Heart left ventricle (tissue), 16 donors: ENCODE measurements at regions of chrX and their contacts with region 1.

Region 1: DNA sequence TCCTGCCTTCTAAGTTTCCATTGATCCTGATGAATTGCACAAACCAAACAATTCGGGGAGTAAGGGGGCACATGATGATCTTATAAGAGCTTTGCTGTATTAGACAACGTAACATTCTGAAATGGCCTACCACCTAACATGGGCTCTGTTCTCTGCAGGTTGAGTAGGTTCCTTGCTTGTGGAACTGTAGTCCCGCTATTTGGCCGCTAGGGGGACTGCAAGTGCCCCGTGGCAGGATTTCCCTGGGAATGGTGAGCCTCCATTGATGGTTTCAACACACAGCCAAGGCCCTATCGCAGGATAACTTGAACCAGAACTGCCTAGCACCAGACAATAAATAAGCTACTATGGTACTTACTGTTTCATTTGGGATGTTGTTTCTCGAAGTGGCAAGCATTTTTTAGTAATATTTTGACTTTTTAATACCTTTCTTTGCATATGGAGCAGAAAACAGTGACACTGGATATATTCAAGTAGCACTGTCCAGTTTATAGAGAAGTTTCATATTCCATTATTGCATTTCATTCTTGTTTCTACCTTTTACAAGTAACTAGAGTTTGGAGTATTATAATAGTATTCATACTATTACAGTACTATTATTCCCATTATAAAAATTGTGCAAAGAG is 11.9 kb downstream of the AR start:
- DNase-seq: peak in 1 of 5 donors; percentile 14
- ATAC-seq: peak in 3 of 4 donors; percentile 32 to 42 (median 36)
- H3K4me3 ChIP-seq: no peak overlapping the region
- H3K27ac ChIP-seq: no peak overlapping the region
- H3K4me1 ChIP-seq: peaks cover 0 to 4% (median 0%) of the 10 kb centered on the region in 12 donors
- H3K27me3 ChIP-seq: peaks cover 0 to 3% (median 0%) of the 10 kb centered on the region in 9 donors
- CTCF ChIP-seq: peak; percentile 39 to 77 (median 62)
- POLR2A ChIP-seq: no peak

Region 2: GRCh38 chrX:67503004-67503403 is 52.7 kb before region 1 on chrX:
- intact Hi-C with region 1: no loop called
- DNase-seq: no peak
- ATAC-seq: no peak
- H3K4me3 ChIP-seq: no peak overlapping the region
- H3K27ac ChIP-seq: no peak overlapping the region
- H3K4me1 ChIP-seq: no peaks in the 10 kb centered on the region
- H3K27me3 ChIP-seq: no peaks in the 10 kb centered on the region
- CTCF ChIP-seq: no peak
- POLR2A ChIP-seq: no peak

Region 3: GRCh38 chrX:67673741-67674274 is 118.1 kb after region 1 on chrX:
- intact Hi-C with region 1: no loop called
- DNase-seq: no peak
- ATAC-seq: peak in 1 of 4 donors; percentile 63
- H3K4me3 ChIP-seq: no peak overlapping the region
- H3K27ac ChIP-seq: no peak overlapping the region
- H3K4me1 ChIP-seq: peaks cover 0 to 2% (median 0%) of the 10 kb centered on the region in 12 donors
- H3K27me3 ChIP-seq: peaks cover 0 to 3% (median 0%) of the 10 kb centered on the region in 9 donors
- CTCF ChIP-seq: no peak
- POLR2A ChIP-seq: no peak

Region 4: DNA sequence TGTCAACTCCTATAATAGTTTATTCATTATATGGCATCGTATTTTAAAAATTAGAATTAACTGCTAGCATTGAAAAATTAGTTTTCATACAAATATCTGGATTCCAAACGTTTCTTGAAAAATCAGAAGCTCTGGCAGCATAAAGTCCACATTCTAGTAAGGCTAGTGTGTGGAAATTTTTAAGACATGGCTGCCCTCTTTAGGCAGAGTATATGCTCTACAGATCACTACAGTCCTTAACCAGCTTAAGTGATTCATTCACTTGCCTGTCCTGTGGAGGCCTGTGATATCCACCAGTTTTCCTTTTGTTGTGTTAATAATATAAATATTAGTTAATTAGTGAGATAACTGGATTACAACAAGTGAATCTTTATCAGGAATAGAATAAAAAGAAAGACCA is 590.4 kb after region 1 on chrX:
- intact Hi-C with region 1: loop called in 1 of 10 experiments (anchors 10 kb)
- DNase-seq: no peak
- ATAC-seq: peak in 2 of 4 donors; percentile 68 to 78
- H3K4me3 ChIP-seq: no peak overlapping the region
- H3K27ac ChIP-seq: no peak overlapping the region
- H3K4me1 ChIP-seq: no peaks in the 10 kb centered on the region
- H3K27me3 ChIP-seq: no peaks in the 10 kb centered on the region
- CTCF ChIP-seq: peak in 11 of 12 donors; percentile 8 to 51 (median 33)
- POLR2A ChIP-seq: no peak

Region 5: GRCh38 chrX:68451720-68452119 is 896.0 kb after region 1 on chrX:
- intact Hi-C with region 1: no loop called
- DNase-seq: no peak
- ATAC-seq: no peak
- H3K4me3 ChIP-seq: no peak overlapping the region
- H3K27ac ChIP-seq: no peak overlapping the region
- H3K4me1 ChIP-seq: no peaks in the 10 kb centered on the region
- H3K27me3 ChIP-seq: no peaks in the 10 kb centered on the region
- CTCF ChIP-seq: no peak
- POLR2A ChIP-seq: no peak